ENCODE measurements at regions of chr15 and their contacts with region 1.

Region 1: GRCh38 chr15:63277038-63277892 is at the start of gene APH1B:
- DNase-seq: peak; percentile 93
- ATAC-seq: peak; percentile 97
- H3K4me3 ChIP-seq: peak within 1 kb of the TSS; percentile 82
- H3K27ac ChIP-seq: peak within 1 kb of the TSS; percentile 89
- H3K4me1 ChIP-seq: peaks cover 13% of the 10 kb centered on the region
- H3K27me3 ChIP-seq: no peaks in the 10 kb centered on the region
- CTCF ChIP-seq: no peak
- total RNA-seq, gene APH1B: 20.0 TPM

Region 2: GRCh38 chr15:63166219-63166618 is 111.0 kb before region 1 on chr15:
- intact Hi-C with region 1: loop called (anchors 10 kb)
- DNase-seq: no peak
- ATAC-seq: peak; percentile 69
- H3K4me3 ChIP-seq: no peak overlapping the region
- H3K27ac ChIP-seq: no peak overlapping the region
- H3K4me1 ChIP-seq: peaks cover 7% of the 10 kb centered on the region
- H3K27me3 ChIP-seq: no peaks in the 10 kb centered on the region
- CTCF ChIP-seq: peak; percentile 25